HEK293T (cell line): ENCODE measurements at regions of chr6 and their contacts with region 1.

Region 1: GRCh38 chr6:31739639-31740396 is at the start of gene MSH5:
- DNase-seq: peak; percentile 99

Region 2: GRCh38 chr6:31636698-31637596 is 102.9 kb before region 1 on chr6:
- CTCF ChIA-PET with region 1: no interaction called
- POLR2A ChIA-PET with region 1: no interaction called
- DNase-seq: no peak

Region 3: GRCh38 chr6:31702819-31703522 is 36.8 kb before region 1 on chr6 and contains the start of gene ABHD16A:
- CTCF ChIA-PET with region 1: interaction called, 5 read pairs
- POLR2A ChIA-PET with region 1: interaction called, 10 read pairs
- DNase-seq: peak; percentile 99

Region 4: DNA sequence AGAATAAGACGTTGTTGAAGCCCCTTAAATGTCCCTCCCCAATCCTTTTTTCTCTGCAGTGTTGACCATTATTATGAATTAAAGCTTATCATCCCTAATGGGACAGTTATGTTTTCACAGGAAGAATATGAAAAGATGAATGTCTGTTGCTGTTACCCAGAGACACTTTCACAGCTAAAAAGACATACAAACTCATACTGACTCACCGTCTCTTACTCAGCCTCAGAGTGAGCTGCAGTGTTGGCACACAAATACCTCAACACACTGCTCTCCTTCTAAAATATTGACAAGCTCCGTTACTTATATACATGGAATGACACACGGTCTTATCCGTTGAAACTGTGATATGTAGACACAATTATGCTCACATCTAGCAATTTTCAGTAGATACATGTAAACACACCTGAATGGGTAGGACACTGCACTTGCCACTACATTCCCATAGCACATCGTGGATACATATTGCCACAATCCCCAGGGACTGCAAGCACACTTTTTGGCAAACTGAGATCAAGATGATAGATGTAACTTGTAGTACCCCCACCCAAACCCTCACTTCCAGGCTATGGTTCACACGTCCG is 13.0 kb after region 1 on chr6:
- CTCF ChIA-PET with region 1: no interaction called
- POLR2A ChIA-PET with region 1: interaction called, 57 read pairs
- DNase-seq: no peak

Region 5: DNA sequence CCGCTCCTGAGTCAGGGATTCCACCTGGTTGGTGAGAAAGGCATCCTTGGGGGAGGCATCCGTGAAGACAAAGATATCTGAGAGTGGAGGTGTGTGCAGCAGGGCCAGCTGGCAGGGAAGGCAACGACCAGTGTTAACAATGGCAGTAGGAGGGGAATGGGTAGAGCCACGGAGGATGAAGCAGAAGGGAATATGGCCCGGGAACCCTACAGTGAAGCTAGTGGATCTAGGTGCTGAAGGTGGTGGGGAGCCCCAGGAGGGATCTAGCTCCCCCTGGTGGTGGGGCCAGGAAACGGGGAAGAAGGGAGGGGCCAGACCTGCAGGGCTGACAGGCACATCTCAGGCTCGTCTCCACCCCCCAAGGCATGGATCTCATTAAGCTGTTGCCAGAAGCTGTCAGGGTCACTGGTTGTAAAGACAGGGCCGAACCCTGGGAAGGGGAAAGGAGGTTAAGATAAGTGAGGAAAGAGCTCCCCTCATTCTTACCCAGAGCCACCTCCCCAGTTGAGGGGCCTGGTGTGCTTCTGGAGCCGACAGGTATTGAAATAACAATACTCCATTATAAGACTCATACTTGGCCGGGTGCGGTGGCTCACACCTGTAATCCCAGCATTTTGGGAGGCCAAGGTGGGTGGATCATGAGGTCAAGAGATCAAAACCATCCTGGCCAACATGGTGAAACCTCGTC is 30.0 kb after region 1 on chr6:
- CTCF ChIA-PET with region 1: interaction called, 19 read pairs
- POLR2A ChIA-PET with region 1: interaction called, 11 read pairs
- DNase-seq: peak; percentile 95

Region 6: DNA sequence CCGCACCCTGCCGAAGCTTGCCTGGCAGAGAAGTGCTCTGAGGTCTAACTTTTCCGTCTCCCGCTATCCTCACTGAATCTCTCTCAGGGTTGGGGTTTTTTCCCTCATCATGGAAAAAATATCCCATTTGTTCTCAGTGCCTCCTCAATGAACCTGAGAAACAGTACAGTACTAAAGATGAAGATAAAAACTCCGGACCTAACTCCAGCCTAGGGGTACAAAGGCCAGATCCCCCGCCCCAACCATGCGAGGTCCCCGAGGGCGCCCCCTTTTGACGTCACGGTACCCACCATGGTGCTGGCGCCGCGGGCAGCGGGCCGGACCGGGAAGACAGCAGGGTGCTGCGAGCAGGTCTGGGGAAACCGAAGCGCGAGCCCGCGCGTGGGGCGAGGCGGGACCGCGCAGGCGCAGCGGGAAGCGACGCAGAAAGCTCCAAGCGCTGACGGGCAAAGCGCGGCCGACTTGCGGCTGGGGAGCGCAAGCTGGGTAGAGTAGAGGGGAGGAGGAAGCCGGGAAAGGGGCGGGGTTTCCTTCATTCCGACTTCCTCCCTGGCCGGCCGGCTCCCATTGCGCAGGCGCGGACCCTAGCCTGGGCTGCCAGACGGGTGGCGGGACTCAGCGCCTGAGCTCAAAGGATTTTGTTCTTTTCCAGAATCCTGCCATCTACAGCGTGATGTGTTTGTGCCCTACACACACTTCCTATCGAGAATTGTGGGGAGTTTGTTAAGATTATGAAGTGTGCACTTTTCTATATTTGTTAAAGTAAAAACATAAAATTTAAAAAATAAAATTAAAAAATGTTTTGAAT is 66.9 kb after region 1 on chr6 and contains the start of gene LSM2:
- CTCF ChIA-PET with region 1: interaction called, 3 read pairs
- POLR2A ChIA-PET with region 1: interaction called, 18 read pairs
- DNase-seq: peak; percentile 100